ENCODE measurements at regions of chr17 and their contacts with region 1.

Region 1: GRCh38 chr17:46193626-46194392 is 580 bp upstream of the KANSL1 start:
- DNase-seq: peak; percentile 84 to 98 (median 94)
- ATAC-seq: peak; percentile 62
- H3K4me3 ChIP-seq: peak overlapping the region; percentile 90
- H3K4me3 Mint-ChIP-seq: peak overlapping the region; percentile 82
- H3K27ac ChIP-seq: peak overlapping the region; percentile 95 to 98
- H3K27ac Mint-ChIP-seq: peak overlapping the region; percentile 93
- H3K4me1 ChIP-seq: peaks cover 40% of the 10 kb centered on the region
- H3K4me1 Mint-ChIP-seq: peaks cover 71% of the 10 kb centered on the region
- H3K27me3 ChIP-seq: no peaks in the 10 kb centered on the region
- H3K27me3 Mint-ChIP-seq: no peaks in the 10 kb centered on the region
- CTCF ChIP-seq: no peak

Region 2: DNA sequence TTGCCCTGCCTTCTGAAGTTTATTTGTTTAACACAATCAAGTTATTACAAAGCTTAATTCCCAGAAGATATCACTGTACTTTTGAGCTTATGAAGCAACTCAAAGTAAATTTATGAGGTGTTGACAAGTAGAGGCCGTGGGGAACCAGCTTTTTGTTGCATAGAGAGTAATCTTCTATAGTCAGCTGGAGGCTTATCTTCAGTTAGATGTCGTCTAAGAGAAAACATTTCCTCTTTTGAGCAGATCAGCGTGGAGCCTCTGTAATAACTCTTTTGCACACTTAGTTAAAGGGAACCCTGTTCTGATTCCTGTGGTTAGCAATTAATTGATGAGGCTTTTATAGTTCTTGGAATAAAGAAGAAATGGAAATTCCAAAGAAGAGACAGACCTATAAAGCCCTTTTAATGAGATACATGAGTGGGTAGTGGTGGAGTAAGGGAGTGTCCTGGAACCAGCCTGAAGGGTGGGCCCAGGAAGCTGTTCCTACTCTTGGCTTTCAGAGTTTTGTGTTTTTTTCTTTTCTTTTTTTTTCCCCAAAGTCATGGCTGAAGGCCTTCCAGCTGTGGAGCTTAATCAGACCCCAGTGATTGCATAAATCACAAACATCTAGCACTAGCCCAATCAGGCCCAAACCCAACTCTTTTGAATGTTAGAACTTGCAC is 848.1 kb before region 1 on chr17:
- CTCF ChIA-PET with region 1: no interaction called
- POLR2A ChIA-PET with region 1: no interaction called
- intact Hi-C with region 1: no loop called
- DNase-seq: no peak
- ATAC-seq: no peak
- H3K4me3 ChIP-seq: no peak overlapping the region
- H3K4me3 Mint-ChIP-seq: no peak overlapping the region
- H3K27ac ChIP-seq: no peak overlapping the region
- H3K27ac Mint-ChIP-seq: no peak overlapping the region
- H3K4me1 ChIP-seq: no peaks in the 10 kb centered on the region
- H3K4me1 Mint-ChIP-seq: no peaks in the 10 kb centered on the region
- H3K27me3 ChIP-seq: no peaks in the 10 kb centered on the region
- H3K27me3 Mint-ChIP-seq: no peaks in the 10 kb centered on the region
- CTCF ChIP-seq: no peak

Region 3: GRCh38 chr17:46020023-46020761 is 173.6 kb before region 1 on chr17:
- CTCF ChIA-PET with region 1: interaction called, 6 read pairs
- POLR2A ChIA-PET with region 1: interaction called, 14 read pairs
- intact Hi-C with region 1: no loop called
- DNase-seq: peak; percentile 33 to 89 (median 58)
- ATAC-seq: peak; percentile 97
- H3K4me3 ChIP-seq: no peak overlapping the region
- H3K4me3 Mint-ChIP-seq: peak overlapping the region; percentile 34
- H3K27ac ChIP-seq: peak overlapping the region; percentile 50 to 71
- H3K27ac Mint-ChIP-seq: peak overlapping the region; percentile 90
- H3K4me1 ChIP-seq: peaks cover 40% of the 10 kb centered on the region
- H3K4me1 Mint-ChIP-seq: peaks cover 24% of the 10 kb centered on the region
- H3K27me3 ChIP-seq: no peaks in the 10 kb centered on the region
- H3K27me3 Mint-ChIP-seq: no peaks in the 10 kb centered on the region
- CTCF ChIP-seq: no peak

Region 4: DNA sequence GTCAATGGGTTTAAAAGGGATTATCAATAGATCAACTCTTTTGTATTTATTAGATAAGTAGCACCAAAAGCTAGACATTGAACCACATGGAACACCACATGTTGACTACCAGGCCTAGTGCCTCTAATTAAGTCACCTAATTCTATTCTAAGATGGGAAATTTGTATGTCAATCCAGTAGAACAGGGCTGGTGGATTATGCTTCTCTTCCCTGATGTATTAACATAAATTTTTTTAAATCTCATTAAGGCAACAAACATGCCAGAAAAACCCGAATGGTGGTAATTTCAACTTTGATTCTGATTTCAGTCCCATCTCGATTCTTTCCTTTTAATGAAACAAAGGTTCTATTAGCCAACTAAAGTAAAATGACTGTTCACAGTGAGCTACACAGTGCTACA is 93.2 kb before region 1 on chr17:
- CTCF ChIA-PET with region 1: interaction called, 8 read pairs
- POLR2A ChIA-PET with region 1: interaction called, 10 read pairs
- intact Hi-C with region 1: no loop called
- DNase-seq: no peak
- ATAC-seq: no peak
- H3K4me3 ChIP-seq: no peak overlapping the region
- H3K4me3 Mint-ChIP-seq: no peak overlapping the region
- H3K27ac ChIP-seq: no peak overlapping the region
- H3K27ac Mint-ChIP-seq: peak overlapping the region; percentile 55
- H3K4me1 ChIP-seq: peaks cover 31% of the 10 kb centered on the region
- H3K4me1 Mint-ChIP-seq: peaks cover 77% of the 10 kb centered on the region
- H3K27me3 ChIP-seq: no peaks in the 10 kb centered on the region
- H3K27me3 Mint-ChIP-seq: no peaks in the 10 kb centered on the region
- CTCF ChIP-seq: no peak

Region 5: DNA sequence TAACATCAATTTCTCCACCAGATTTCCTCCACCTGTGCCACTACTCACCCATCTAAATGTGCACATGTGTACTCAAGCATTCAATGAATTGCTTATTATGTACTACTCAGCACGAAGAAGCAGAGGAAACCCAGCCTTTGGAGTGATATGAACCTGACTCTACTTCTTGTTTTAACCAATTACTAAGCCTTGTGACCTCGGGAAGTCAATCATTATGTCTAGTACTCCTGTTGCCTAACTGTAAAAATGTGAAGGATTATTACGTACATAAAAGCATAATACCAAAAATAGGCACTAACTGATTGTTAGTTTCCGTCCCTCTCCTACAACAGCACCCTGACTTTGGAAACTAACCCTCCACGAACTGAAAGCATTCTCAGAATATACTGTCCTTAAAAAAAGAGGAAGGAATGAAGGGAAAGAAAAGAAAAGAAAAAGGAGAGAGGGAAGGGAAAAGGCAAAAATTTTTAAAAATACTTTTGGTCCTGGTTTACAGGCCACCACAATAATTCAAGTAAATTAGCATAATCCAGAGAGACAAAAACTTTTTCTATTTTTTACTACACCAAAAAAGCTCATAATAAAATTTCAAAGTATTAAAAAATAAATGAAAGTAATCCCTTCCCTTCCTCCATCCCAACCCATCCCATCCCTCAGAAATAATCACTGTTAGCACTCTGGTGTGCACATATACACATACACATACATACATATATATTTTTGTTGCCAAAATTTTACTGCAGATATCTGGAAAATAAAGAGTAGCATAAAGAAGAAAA is 54.2 kb before region 1 on chr17:
- CTCF ChIA-PET with region 1: interaction called, 16 read pairs
- POLR2A ChIA-PET with region 1: interaction called, 4 read pairs
- intact Hi-C with region 1: loop called (anchors 2 to 5 kb)
- DNase-seq: no peak
- ATAC-seq: no peak
- H3K4me3 ChIP-seq: no peak overlapping the region
- H3K4me3 Mint-ChIP-seq: peak overlapping the region; percentile 40
- H3K27ac ChIP-seq: no peak overlapping the region
- H3K27ac Mint-ChIP-seq: peak overlapping the region; percentile 75
- H3K4me1 ChIP-seq: peaks cover 26% of the 10 kb centered on the region
- H3K4me1 Mint-ChIP-seq: peaks cover 97% of the 10 kb centered on the region
- H3K27me3 ChIP-seq: no peaks in the 10 kb centered on the region
- H3K27me3 Mint-ChIP-seq: no peaks in the 10 kb centered on the region
- CTCF ChIP-seq: no peak

Region 6: DNA sequence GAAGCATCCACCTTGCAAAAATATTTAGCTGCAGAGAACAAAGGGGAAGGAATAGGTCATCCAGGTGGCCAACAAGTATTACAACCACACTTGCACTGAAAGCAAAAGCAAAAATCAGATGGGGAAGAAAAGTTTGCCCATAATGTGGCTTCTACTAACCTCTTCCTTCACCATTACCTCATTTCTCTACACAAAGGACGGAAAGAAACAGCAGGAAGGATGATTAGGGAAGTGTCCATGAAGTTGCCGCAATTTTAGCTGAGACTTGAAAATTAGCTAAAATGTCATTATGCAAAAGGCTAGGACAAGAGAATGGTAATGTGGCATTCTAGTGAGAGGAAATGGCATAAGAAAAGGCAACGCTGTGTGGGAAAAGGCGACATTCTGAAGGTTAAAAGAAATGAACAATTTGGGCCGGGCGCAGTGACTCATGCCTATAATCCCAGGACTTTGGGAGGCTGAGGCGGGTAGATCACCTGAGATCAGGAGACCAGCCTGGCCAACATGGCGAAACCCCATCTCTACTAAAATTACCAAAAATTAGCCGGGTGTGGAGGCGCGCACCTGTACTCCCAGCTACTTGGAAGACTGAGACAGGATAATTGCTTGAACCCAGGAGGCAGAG is 14.3 kb before region 1 on chr17:
- CTCF ChIA-PET with region 1: interaction called, 25 read pairs
- POLR2A ChIA-PET with region 1: interaction called, 33 read pairs
- intact Hi-C with region 1: loop called in 1 of 2 experiments (anchors 2 kb)
- DNase-seq: peak in 3 of 14 experiments; percentile 27 to 54 (median 32)
- ATAC-seq: peak; percentile 45
- H3K4me3 ChIP-seq: no peak overlapping the region
- H3K4me3 Mint-ChIP-seq: peak overlapping the region; percentile 53
- H3K27ac ChIP-seq: no peak overlapping the region
- H3K27ac Mint-ChIP-seq: peak overlapping the region; percentile 80
- H3K4me1 ChIP-seq: peaks cover 57% of the 10 kb centered on the region
- H3K4me1 Mint-ChIP-seq: peaks cover 94% of the 10 kb centered on the region
- H3K27me3 ChIP-seq: no peaks in the 10 kb centered on the region
- H3K27me3 Mint-ChIP-seq: no peaks in the 10 kb centered on the region
- CTCF ChIP-seq: no peak